Dorsolateral prefrontal cortex (tissue), 120 donors: ENCODE measurements at regions of chr1 and their contacts with region 1.

Region 1: GRCh38 chr1:48061162-48062136 is 64.3 kb upstream of the TRABD2B start:
- DNase-seq: peak in 6 of 10 donors; percentile 38 to 79 (median 45)
- H3K4me3 ChIP-seq: no peak overlapping the region
- H3K27ac ChIP-seq: no peak overlapping the region
- H3K27me3 ChIP-seq: peaks cover 0 to 15% (median 0%) of the 10 kb centered on the region in 45 donors
- CTCF ChIP-seq: peak; percentile 45 to 93 (median 78)

Region 2: DNA sequence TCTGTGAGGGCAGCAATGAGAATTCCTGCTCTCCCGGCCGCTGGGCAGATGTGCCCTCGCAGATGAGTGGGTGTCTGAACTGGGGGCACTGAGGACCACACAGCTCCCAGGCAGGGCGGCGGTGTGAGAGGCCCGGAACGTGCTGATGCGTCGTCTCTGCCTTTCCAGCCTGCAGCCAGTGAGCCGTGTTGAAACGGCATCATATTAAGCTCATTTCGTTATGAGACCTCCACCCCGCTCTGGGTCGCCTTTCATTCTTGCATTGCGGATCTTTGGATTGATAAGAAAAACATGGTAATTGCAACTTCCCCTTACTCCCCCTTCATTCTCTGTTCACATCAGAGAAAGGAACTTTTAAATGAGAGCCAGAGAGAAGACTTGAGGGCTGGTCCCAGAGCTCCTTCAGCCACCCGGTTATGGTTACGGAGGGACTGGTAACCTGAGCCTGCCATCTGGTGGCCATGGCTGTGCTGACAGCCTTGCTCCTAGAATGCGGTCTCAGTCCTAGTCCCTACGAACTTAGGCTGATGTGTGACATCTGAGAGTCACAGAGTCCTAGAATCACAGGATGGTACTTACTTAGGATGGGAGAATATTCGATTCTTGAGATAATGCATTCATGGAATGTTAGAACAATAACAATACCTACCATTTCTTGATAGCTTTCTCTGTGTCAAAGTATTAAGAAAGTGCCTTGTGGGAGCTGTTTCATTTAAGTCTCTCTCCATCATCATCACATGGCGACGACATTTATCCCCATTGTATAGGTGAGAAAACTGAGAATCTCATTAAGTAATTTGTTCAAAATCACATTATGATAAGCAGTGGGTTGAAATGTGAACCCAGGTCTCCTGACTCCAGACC is 335.2 kb before region 1 on chr1:
- intact Hi-C with region 1: loop called in 1 of 2 experiments (anchors 5 kb)
- DNase-seq: peak; percentile 73 to 87 (median 80)
- H3K4me3 ChIP-seq: peak overlapping the region in 46 of 59 donors; percentile 1 to 56 (median 38)
- H3K27ac ChIP-seq: no peak overlapping the region
- H3K27me3 ChIP-seq: peaks cover 0 to 53% (median 32%) of the 10 kb centered on the region in 45 donors
- CTCF ChIP-seq: peak; percentile 29 to 96 (median 91)

Region 3: DNA sequence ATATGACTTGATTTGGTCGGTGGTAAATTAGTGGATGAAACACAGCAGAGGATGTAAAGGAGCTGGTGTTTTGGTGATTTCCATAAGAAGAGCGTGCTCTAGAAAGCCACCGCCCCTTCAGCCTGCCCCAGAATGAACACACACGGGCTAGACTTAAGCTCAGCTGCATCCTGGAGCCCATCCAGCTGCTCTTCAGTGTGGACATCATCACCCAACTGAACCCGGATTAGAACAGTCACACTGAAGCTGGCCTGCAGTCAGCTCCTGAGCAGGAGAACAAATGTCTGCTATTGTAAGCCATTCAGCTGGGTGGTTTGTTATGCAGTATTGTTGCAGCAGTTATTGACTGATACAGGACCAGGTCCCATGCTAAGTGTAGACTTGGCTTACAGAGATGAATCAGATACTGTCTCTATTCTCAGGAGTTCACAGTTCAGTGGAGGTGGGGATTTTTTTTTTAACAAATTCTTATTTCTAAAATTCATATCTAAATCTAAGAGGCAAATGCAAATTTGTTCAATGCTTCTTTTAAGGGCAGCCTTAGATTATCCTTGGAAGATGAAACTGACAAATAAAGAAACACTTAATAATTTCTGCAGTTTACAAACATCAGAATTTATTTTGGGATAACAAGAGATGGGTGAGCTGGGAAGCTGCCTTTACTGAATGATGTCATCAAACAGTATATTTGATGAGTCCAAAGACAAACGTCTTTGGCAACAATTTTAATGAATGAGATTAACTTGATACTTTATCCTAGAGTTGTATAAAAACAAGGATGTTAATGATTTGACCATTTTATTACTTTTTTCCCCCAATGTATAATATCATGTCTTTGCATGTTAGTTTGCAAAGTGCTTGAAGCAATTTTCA is 315.5 kb before region 1 on chr1:
- intact Hi-C with region 1: loop called in 1 of 2 experiments (anchors 10 kb)
- DNase-seq: peak in 1 of 10 donors; percentile 5
- H3K4me3 ChIP-seq: no peak overlapping the region
- H3K27ac ChIP-seq: no peak overlapping the region
- H3K27me3 ChIP-seq: peaks cover 0 to 34% (median 0%) of the 10 kb centered on the region in 45 donors
- CTCF ChIP-seq: no peak

Region 4: DNA sequence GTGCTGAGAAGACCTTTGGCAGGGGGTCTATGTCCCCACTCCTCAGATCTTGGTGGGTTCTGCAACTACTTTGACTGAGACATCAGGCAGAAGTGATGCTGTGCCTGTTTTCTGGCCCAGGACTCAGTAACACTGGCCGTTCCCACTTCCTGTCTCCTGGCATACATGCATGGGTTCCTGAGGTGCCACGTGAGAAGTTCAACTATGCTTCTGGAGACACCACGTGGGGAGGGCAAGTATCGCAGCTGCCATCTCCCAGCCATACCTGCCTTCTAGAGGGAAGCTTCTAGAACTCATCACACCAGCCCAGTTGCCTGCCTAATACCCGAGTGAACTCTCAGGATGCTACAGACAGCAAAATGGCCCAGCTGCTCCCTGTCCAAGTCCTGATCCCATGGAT is 130.1 kb before region 1 on chr1:
- intact Hi-C with region 1: no loop called
- DNase-seq: no peak
- H3K4me3 ChIP-seq: no peak overlapping the region
- H3K27ac ChIP-seq: no peak overlapping the region
- H3K27me3 ChIP-seq: peaks cover 0 to 18% (median 0%) of the 10 kb centered on the region in 45 donors
- CTCF ChIP-seq: no peak

Region 5: DNA sequence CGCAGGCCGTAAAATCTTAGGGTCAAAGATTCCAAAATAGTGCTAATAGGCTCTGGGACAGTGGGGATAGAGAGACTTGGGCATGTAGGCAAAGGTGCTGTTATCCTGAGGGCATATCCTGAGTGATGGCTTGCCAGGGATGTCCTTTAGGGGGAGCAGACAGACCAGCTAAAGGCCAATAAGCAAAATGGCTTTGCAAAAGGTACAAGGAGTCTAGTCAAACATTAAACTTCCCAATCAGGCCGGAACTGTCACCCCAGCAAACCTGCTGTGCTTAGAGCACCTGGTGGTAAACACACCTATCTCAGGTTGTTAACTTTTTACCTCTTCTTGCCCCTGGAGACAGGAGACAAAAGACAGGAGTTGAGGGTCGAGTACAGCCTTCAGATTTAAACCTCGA is 113.3 kb before region 1 on chr1:
- intact Hi-C with region 1: loop called in 1 of 2 experiments (anchors 5 kb)
- DNase-seq: peak in 1 of 10 donors; percentile 48
- H3K4me3 ChIP-seq: no peak overlapping the region
- H3K27ac ChIP-seq: no peak overlapping the region
- H3K27me3 ChIP-seq: no peaks in the 10 kb centered on the region
- CTCF ChIP-seq: peak in 32 of 56 donors; percentile 15 to 68 (median 42)

Region 6: GRCh38 chr1:47997289-47998200 is 63.9 kb before region 1 on chr1 and contains the start of gene TRABD2B:
- intact Hi-C with region 1: loop called (anchors 1 to 2 kb)
- DNase-seq: peak; percentile 62 to 90 (median 76)
- H3K4me3 ChIP-seq: peak within 1 kb of the TSS; percentile 19 to 72 (median 57)
- H3K27ac ChIP-seq: peak within 1 kb of the TSS in 9 of 59 donors; percentile 20 to 68 (median 47)
- H3K27me3 ChIP-seq: peaks cover 0 to 44% (median 13%) of the 10 kb centered on the region in 45 donors
- CTCF ChIP-seq: peak; percentile 61 to 99 (median 92)
- total RNA-seq, gene TRABD2B: 0.06 to 2.1 (median 0.31) TPM in 107 of 120 experiments, not detected in the others

Region 7: GRCh38 chr1:48026275-48026674 is 35.2 kb before region 1 on chr1:
- intact Hi-C with region 1: no loop called
- DNase-seq: no peak
- H3K4me3 ChIP-seq: no peak overlapping the region
- H3K27ac ChIP-seq: no peak overlapping the region
- H3K27me3 ChIP-seq: peaks cover 0 to 2% (median 0%) of the 10 kb centered on the region in 45 donors
- CTCF ChIP-seq: no peak

Region 8: DNA sequence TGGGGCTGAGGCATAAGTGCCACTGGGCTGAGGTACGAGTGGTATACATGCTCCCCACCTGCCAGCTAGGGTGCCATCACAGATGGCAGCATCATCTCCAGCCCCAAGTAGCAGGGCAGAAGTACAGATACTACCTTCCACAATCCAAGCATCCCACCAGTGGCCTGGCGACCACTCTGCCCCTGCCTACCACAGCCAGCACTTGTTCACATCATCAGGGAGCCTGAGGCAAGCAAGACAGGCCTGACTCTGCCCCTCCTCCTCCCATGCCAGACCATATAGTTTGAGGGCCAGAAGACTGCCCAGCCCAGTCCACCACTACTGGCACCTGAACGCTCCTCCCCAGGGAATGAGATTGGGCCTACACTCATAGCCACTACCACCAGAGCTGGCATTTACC is 326.0 kb after region 1 on chr1:
- intact Hi-C with region 1: no loop called
- DNase-seq: no peak
- H3K4me3 ChIP-seq: no peak overlapping the region
- H3K27ac ChIP-seq: no peak overlapping the region
- H3K27me3 ChIP-seq: no peaks in the 10 kb centered on the region
- CTCF ChIP-seq: no peak